Left cardiac atrium (tissue), 4 donors: ENCODE measurements at regions of chr2 and their contacts with region 1.

Region 1: DNA sequence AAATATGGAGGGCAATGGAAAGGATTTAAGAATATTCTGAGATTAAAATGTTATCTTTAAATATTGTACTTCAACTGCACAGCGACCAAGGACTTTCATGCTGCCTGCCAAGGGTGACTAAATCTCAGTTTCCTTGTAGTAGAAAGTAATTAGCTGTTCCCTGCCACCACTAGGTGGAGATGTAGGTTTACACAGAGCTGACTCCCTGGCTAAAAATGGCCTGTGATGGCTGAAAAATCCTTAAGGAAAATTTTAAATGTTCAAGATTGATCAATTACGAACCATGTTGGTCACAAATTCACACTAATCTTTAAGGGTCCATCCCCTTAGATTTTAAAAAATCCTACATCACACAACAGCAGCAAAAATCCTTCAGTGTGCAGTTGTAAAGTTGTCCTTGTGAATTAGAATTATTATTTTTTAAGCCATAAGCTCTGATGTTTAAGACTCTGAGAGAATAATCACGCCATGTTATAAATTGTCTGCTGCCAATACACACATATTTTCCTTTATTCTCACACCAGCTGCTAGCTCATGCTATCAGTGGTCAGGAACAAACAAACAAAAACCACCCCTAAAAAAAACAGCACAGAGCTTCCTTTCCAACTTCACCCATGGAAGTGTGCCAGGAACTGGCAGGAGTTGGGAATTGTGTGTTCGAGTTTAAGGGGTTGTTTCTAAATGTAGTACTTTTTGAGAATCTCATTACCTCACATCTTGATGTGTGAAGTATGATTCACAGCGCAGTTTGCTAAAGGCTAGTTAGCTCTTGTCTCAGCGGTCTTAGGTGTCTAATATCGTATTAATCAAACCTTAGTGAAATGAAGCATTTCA is 399.8 kb downstream of the TMEM182 start:
- DNase-seq: peak; percentile 62
- ATAC-seq: peak; percentile 27 to 74

Region 2: GRCh38 chr2:103132536-103133217 is 29.0 kb before region 1 on chr2:
- intact Hi-C with region 1: no loop called
- DNase-seq: no peak
- ATAC-seq: no peak

Region 3: DNA sequence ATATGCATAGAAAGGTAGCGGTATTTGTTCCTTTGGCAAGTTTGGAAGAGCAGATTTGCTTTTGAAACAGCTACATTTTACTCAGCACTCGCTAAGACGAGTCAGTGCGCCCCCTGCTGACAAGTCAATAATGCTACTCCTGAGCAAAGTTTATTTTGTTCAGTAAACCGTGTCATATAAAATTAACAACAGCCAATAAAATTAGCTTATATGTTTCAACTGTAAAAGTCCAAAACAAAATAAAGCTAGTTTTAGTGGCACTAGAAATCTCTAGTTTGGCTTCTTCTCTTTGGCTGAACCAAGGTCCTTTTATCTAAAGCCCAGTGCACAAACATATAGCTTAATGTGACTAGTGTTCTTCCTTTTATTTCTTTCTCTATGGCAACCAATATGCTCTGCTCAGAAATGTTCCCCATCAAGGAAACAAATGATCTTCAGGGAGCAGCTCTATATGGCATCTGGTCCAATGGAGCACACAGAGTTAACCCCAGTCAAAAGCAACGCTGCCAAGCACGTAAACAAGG is 1688.0 kb after region 1 on chr2:
- intact Hi-C with region 1: loop called in 1 of 2 experiments (anchors 5 kb)
- DNase-seq: peak; percentile 65
- ATAC-seq: peak in 1 of 2 donors; percentile 30